ENCODE measurements at regions of chr12 and their contacts with region 1.

Region 1: DNA sequence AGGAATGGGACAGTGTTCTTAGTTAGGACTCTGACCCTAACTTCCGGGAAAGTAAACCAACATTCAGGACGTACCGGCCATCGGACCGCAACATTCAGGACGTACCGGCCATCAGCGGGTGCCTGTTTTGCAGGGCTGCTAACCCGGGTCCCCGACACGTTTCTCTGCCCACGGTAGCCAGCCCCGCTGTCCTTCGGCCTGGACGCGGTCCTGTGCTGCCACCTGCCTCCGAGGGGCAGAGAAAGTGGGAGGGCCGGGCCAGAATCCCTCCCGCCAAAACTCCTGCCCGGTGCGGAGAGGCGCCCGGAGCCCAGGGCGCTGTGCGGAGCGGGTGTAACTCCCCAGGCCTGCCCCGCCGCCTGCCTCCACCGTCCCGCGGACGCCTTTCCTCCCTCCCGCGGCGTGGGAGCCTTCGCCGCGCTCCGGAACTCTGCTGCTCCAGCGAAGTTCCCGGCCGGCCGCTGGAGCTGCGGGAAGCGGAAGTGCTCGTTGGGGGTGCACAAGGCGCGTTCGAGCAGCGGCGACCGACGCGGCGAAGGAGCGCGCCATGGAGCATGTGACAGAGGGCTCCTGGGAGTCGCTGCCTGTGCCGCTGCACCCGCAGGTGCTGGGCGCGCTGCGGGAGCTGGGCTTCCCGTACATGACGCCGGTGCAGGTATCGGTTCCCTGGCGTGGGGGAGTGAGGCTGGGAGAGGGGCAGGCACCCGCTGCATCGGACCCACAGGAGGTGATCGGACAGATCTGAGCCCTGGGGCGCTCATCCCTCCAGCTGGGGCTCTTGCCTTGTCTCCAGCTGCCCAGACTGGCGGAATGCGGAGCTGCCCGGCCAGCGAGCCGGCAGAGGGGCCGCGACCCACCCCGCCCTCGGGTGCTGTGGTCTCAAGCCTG is at the start of gene DDX55:
- DNase-seq: peak; percentile 89
- H3K4me3 ChIP-seq: peak within 1 kb of the TSS; percentile 72 to 99 (median 84)
- H3K27ac ChIP-seq: peak within 1 kb of the TSS; percentile 84 to 90 (median 85)
- H3K4me1 ChIP-seq: peaks cover 0 to 25% (median 20%) of the 10 kb centered on the region in 4 donors
- H3K27me3 ChIP-seq: no peaks in the 10 kb centered on the region
- CTCF ChIP-seq: peak in 3 of 4 experiments; percentile 13 to 51 (median 25)
- EP300 ChIP-seq: peak in 1 of 4 donors; percentile 46
- POLR2A ChIP-seq: peak; percentile 33 to 51
- total RNA-seq, gene DDX55: 13.6 to 33.0 (median 18.2) TPM

Region 2: GRCh38 chr12:122526683-122527477 is 1075.0 kb before region 1 on chr12 and contains the starts of genes KNTC1 and RSRC2:
- intact Hi-C with region 1: loop called (anchors 10 kb)
- DNase-seq: peak; percentile 99
- H3K4me3 ChIP-seq: peak within 1 kb of the TSS; percentile 57 to 79 (median 66)
- H3K27ac ChIP-seq: peak within 1 kb of the TSS; percentile 87 to 95 (median 94)
- H3K4me1 ChIP-seq: peaks cover 0 to 49% (median 45%) of the 10 kb centered on the region in 4 donors
- H3K27me3 ChIP-seq: no peaks in the 10 kb centered on the region
- CTCF ChIP-seq: no peak
- EP300 ChIP-seq: peak in 2 of 4 donors; percentile 10 to 34
- POLR2A ChIP-seq: peak; percentile 96 to 97
- total RNA-seq, gene KNTC1: 5.8 to 13.8 (median 9.1) TPM
- total RNA-seq, gene RSRC2: 60.9 to 79.9 (median 68.8) TPM

Region 3: DNA sequence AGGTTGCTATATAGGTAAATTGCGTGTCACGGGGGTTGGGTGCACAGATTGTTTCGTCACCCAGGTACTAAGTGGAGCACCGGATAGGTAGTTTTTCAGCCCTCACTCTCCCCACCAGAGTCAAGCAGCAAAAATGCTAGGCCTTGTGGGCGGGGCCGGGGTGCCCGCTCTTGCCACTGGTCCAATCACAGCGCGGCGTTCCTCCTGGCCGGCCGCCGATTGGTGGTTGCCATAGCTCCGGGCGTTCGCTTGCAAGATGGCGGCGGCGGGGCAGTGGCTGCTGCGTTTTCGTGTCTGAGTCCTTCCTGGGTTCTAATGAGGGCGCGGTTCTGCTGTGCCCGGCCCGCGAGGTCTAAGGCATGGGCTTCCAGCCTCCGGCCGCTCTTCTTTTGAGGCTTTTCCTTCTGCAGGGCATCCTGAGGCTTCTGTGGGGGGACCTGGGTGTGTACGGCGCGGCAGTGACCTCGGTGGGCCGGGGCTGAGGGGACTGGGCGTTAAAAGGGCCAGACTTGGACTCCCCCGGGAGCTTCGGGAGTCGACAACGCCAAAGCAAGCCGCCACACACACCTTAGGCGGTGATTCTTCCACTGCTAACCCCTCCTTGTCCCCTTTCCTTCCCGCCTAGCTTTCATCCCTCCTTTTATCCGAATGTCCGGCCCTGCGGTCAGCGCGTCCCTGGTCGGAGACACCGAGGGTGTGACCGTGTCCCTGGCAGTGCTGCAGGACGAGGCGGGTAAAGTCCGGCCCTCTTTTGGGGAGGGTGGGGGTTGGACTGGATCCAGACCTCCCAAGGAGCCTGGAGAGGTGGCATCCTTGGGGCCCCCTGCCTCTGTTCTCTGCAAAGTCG is 69.3 kb after region 1 on chr12 and contains the start of gene TCTN2:
- intact Hi-C with region 1: no loop called
- DNase-seq: peak; percentile 98
- H3K4me3 ChIP-seq: peak within 1 kb of the TSS; percentile 81 to 95 (median 88)
- H3K27ac ChIP-seq: peak within 1 kb of the TSS; percentile 51 to 70 (median 61)
- H3K4me1 ChIP-seq: peaks cover 0 to 19% (median 10%) of the 10 kb centered on the region in 4 donors
- H3K27me3 ChIP-seq: no peaks in the 10 kb centered on the region
- CTCF ChIP-seq: no peak
- EP300 ChIP-seq: no peak
- POLR2A ChIP-seq: no peak
- total RNA-seq, gene TCTN2: 4.6 to 11.6 (median 8.1) TPM